Esophagus muscularis mucosa (tissue), 4 donors: ENCODE measurements at regions of chr3 and their contacts with region 1.

Region 1: GRCh38 chr3:57169872-57170623 is 4.9 kb upstream of the IL17RD start:
- DNase-seq: no peak
- H3K4me3 ChIP-seq: peak overlapping the region; percentile 53 to 62 (median 55)
- H3K27ac ChIP-seq: no peak overlapping the region
- H3K4me1 ChIP-seq: peaks cover 0 to 19% (median 18%) of the 10 kb centered on the region in 4 donors
- H3K27me3 ChIP-seq: no peaks in the 10 kb centered on the region
- CTCF ChIP-seq: peak; percentile 68 to 91 (median 75)
- EP300 ChIP-seq: no peak
- POLR2A ChIP-seq: no peak

Region 2: DNA sequence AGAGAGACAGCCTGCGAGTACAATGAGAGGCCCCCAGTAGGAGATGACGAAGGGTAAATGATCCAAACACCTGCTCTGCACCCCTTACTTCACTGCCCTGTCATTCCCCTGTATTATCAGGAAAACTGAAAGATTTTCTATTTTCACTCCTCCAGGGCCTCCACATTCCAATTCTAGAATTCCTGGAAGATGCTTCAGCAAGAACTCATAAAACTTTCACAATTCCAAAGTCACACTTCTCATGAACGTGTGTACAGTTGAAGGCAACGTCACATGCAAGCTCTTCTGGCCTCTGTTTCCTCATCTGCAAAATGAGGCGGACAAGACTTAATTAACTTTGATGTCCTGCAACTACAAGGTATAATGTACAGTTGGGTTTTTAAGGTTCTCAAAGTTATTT is 172.4 kb before region 1 on chr3:
- intact Hi-C with region 1: loop called (anchors 10 kb)
- DNase-seq: no peak
- H3K4me3 ChIP-seq: no peak overlapping the region
- H3K27ac ChIP-seq: peak overlapping the region; percentile 35 to 79 (median 56)
- H3K4me1 ChIP-seq: peaks cover 0 to 31% (median 26%) of the 10 kb centered on the region in 4 donors
- H3K27me3 ChIP-seq: no peaks in the 10 kb centered on the region
- CTCF ChIP-seq: no peak
- EP300 ChIP-seq: no peak
- POLR2A ChIP-seq: no peak

Region 3: GRCh38 chr3:57100046-57100695 is 69.9 kb before region 1 on chr3:
- intact Hi-C with region 1: loop called (anchors 5 kb)
- DNase-seq: no peak
- H3K4me3 ChIP-seq: no peak overlapping the region
- H3K27ac ChIP-seq: no peak overlapping the region
- H3K4me1 ChIP-seq: peaks cover 0 to 5% (median 0%) of the 10 kb centered on the region in 4 donors
- H3K27me3 ChIP-seq: no peaks in the 10 kb centered on the region
- CTCF ChIP-seq: peak in 2 of 3 experiments; percentile 85 to 86
- EP300 ChIP-seq: no peak
- POLR2A ChIP-seq: no peak